ENCODE measurements at regions of chr2 and their contacts with region 1.

Region 1: GRCh38 chr2:11784747-11785610 is 38.5 kb downstream of the LPIN1 start:
- DNase-seq: peak in 1 of 3 donors; percentile 37
- ATAC-seq: peak; percentile 65 to 77 (median 68)
- H3K4me3 ChIP-seq: peak overlapping the region in 1 of 3 donors; percentile 24
- H3K27ac ChIP-seq: no peak overlapping the region
- H3K4me1 ChIP-seq: no peaks in the 10 kb centered on the region
- H3K27me3 ChIP-seq: no peaks in the 10 kb centered on the region
- CTCF ChIP-seq: peak; percentile 64 to 84 (median 83)
- POLR2A ChIP-seq: no peak

Region 2: DNA sequence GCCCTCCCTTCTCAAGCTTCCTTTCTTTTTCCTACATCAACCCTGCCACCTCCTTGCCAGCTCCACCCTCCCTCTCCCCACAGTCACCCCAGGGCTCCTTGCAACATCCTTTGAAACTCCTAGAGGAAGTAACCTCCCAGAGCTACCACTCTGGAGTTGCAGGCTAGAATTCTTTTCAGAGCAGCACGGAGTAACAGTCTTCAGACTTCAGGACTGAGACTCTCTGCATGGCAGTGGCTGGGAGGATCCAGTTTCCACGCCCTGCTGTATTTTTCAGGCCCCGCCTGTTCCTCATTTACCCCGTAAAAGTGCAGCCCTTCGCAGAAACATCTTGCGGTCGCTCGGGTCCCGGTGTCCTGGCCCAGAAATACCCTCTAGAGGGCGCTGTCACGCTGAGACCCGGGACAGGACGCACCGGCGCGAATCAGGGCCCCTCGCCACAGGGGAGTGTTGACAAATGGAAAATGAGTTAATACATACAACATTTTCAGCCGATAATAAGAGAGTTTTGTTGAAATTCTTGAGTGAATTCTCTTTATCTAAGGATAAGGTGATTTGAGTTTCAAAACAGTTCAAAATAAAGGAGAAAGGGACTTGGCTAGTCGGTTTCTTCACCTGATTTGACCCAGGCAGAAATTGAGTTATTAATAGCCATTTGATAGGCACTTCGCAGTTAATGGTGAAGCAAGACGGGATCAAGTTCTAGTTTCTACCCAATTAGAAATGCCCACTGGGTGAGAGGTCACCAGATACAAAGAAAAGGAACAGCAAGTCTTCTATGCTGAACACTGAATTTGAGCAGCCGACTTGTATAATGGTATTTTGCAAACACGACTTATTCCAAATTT is 96.5 kb before region 1 on chr2:
- intact Hi-C with region 1: loop called (anchors 5 kb)
- DNase-seq: peak; percentile 76 to 83 (median 79)
- ATAC-seq: peak; percentile 74 to 79 (median 76)
- H3K4me3 ChIP-seq: no peak overlapping the region
- H3K27ac ChIP-seq: no peak overlapping the region
- H3K4me1 ChIP-seq: peaks cover 0 to 3% (median 1%) of the 10 kb centered on the region in 4 donors
- H3K27me3 ChIP-seq: no peaks in the 10 kb centered on the region
- CTCF ChIP-seq: peak; percentile 82 to 94 (median 92)
- POLR2A ChIP-seq: no peak

Measured in right lobe of liver (tissue), 6 donors.